Mammary epithelial cell (primary cell): ENCODE measurements at regions of chr10 and their contacts with region 1.

Region 1: GRCh38 chr10:8444630-8445029 is 390.1 kb downstream of the GATA3 start:
- DNase-seq: no peak
- H3K4me3 ChIP-seq: no peak overlapping the region
- H3K27ac ChIP-seq: no peak overlapping the region
- H3K4me1 ChIP-seq: no peaks in the 10 kb centered on the region
- H3K27me3 ChIP-seq: peaks cover 2% of the 10 kb centered on the region
- CTCF ChIP-seq: no peak

Region 2: DNA sequence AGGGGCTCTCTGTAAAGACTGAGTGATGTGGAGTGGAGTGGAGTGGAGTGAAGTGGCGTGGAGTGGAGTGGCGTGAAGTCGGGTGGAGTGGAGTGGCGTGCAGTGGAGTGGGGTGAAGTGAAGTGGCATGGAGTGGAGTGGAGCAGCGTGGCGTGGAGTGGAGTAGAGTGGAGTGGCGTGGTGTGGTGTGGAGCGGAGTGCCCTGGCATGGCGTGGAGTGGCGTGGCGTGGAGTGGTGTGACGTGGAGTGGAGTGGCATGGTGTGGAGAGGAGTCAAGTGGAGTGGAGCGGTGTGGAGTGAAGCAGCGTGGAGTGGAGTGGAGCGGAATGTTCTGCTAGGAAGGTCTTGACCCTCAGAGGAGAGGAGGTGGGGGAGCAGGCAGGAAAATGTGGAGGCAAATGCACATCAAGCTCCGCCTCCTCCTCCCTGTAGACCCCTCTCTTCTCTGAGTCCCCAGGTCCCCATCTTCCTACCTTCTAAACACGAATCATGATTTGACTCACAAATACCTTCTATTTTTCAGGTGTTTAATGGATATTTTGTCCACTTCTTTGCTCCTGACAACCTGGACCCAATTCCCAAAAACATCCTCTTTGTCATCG is 721.6 kb before region 1 on chr10:
- CTCF ChIA-PET with region 1: no interaction called
- dilution Hi-C with region 1: no loop called
- in situ Hi-C with region 1: no loop called
- intact Hi-C with region 1: no loop called
- DNase-seq: no peak
- H3K4me3 ChIP-seq: no peak overlapping the region
- H3K27ac ChIP-seq: no peak overlapping the region
- H3K4me1 ChIP-seq: no peaks in the 10 kb centered on the region
- H3K27me3 ChIP-seq: peaks cover 3% of the 10 kb centered on the region
- CTCF ChIP-seq: no peak

Region 3: DNA sequence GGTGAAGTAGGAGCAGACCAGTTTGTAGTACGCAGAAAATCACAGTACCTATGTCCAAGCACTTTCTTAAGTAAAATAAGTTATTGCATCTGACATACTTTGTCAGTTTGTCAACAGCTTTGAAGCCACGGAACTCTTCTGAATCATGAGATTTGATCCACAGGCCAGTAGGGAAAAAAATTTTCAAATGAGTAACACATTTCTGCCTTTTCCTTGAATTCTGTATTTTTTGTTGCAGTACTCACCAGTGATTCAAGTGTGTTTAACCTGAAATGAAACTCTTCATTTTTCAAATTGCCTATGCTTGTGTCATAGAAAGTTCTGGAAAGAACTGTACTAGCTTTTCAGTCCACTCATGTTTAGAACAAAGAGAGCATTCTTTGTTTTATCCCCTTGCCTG is 52.4 kb before region 1 on chr10:
- CTCF ChIA-PET with region 1: no interaction called
- dilution Hi-C with region 1: loop called (anchors 5 kb)
- in situ Hi-C with region 1: no loop called
- intact Hi-C with region 1: no loop called
- DNase-seq: peak; percentile 86
- H3K4me3 ChIP-seq: no peak overlapping the region
- H3K27ac ChIP-seq: no peak overlapping the region
- H3K4me1 ChIP-seq: peaks cover 28% of the 10 kb centered on the region
- H3K27me3 ChIP-seq: no peaks in the 10 kb centered on the region
- CTCF ChIP-seq: no peak

Region 4: DNA sequence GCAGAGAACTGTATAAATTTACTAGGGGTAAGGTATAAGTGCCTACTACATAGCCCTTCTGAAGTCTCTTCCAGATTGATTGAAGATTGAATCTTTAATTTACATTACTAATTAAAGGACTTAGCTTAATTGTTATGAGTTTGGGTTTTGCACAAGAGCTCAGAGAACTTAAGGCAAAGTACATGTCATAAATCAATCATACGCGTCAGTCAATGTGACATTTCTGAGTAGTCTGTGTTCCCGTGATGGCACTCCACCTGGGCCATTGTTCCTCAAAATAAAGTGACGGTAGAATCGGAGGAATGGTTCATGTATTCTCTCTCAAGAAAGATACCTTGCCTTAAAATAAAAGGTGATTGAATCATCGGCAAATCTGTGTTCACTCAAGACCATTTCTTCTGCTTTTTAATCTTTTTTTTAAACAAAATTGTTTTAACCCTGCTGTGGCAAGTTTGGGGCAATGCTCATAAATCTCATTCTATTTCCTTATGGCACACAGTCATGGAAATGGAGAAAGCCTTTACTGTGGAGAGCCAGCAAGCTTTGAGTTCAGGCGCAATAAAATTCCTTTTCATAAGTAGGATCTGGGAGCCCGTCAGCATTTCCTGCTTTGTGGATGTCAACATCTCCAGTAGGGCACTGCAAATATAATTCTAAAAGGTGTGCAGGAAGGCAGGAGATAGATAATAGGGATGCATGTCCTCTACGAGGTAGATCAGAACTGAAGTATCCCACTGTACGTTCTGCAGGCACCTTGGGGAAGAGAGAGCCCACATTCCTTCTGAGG is 37.3 kb after region 1 on chr10:
- CTCF ChIA-PET with region 1: no interaction called
- dilution Hi-C with region 1: loop called (anchors 5 kb)
- in situ Hi-C with region 1: no loop called
- intact Hi-C with region 1: no loop called
- DNase-seq: no peak
- H3K4me3 ChIP-seq: no peak overlapping the region
- H3K27ac ChIP-seq: no peak overlapping the region
- H3K4me1 ChIP-seq: no peaks in the 10 kb centered on the region
- H3K27me3 ChIP-seq: no peaks in the 10 kb centered on the region
- CTCF ChIP-seq: no peak